ENCODE measurements at regions of chr7 and their contacts with region 1.

Region 1: GRCh38 chr7:102396027-102397019 is at the start of gene PRKRIP1:
- DNase-seq: peak; percentile 98
- ATAC-seq: peak; percentile 99
- H3K4me3 ChIP-seq: peak within 1 kb of the TSS; percentile 67 to 98 (median 95)
- H3K4me3 Mint-ChIP-seq: peak within 1 kb of the TSS; percentile 87
- H3K27ac ChIP-seq: peak within 1 kb of the TSS; percentile 86 to 88
- H3K27ac Mint-ChIP-seq: peak within 1 kb of the TSS; percentile 92
- H3K4me1 ChIP-seq: peaks cover 15 to 21% of the 10 kb centered on the region in 2 donors
- H3K4me1 Mint-ChIP-seq: peaks cover 29% of the 10 kb centered on the region
- H3K27me3 ChIP-seq: no peaks in the 10 kb centered on the region
- H3K27me3 Mint-ChIP-seq: no peaks in the 10 kb centered on the region
- CTCF ChIP-seq: no peak
- total RNA-seq, gene PRKRIP1: 57.9 and 59.1 TPM in 2 replicates

Region 2: GRCh38 chr7:102279537-102280400 is 116.6 kb before region 1 on chr7:
- CTCF ChIA-PET with region 1: interaction called, 351 read pairs
- POLR2A ChIA-PET with region 1: interaction called, 7 read pairs
- intact Hi-C with region 1: no loop called
- DNase-seq: peak; percentile 84
- ATAC-seq: peak; percentile 90
- H3K4me3 ChIP-seq: peak overlapping the region in 3 of 5 experiments; percentile 13 to 44 (median 15)
- H3K4me3 Mint-ChIP-seq: peak overlapping the region; percentile 83
- H3K27ac ChIP-seq: no peak overlapping the region
- H3K27ac Mint-ChIP-seq: peak overlapping the region; percentile 84
- H3K4me1 ChIP-seq: peaks cover 17 to 24% of the 10 kb centered on the region in 2 donors
- H3K4me1 Mint-ChIP-seq: peaks cover 28% of the 10 kb centered on the region
- H3K27me3 ChIP-seq: no peaks in the 10 kb centered on the region
- H3K27me3 Mint-ChIP-seq: no peaks in the 10 kb centered on the region
- CTCF ChIP-seq: peak; percentile 87

Region 3: GRCh38 chr7:102306875-102307677 is 89.2 kb before region 1 on chr7:
- CTCF ChIA-PET with region 1: interaction called, 7 read pairs
- POLR2A ChIA-PET with region 1: interaction called, 3 read pairs
- intact Hi-C with region 1: loop called (anchors 1 kb)
- DNase-seq: peak; percentile 90
- ATAC-seq: peak; percentile 86
- H3K4me3 ChIP-seq: peak overlapping the region in 4 of 5 experiments; percentile 37 to 51 (median 44)
- H3K4me3 Mint-ChIP-seq: peak overlapping the region; percentile 84
- H3K27ac ChIP-seq: peak overlapping the region; percentile 93 to 95
- H3K27ac Mint-ChIP-seq: peak overlapping the region; percentile 98
- H3K4me1 ChIP-seq: peaks cover 78 to 90% of the 10 kb centered on the region in 2 donors
- H3K4me1 Mint-ChIP-seq: peaks cover 82% of the 10 kb centered on the region
- H3K27me3 ChIP-seq: no peaks in the 10 kb centered on the region
- H3K27me3 Mint-ChIP-seq: no peaks in the 10 kb centered on the region
- CTCF ChIP-seq: no peak

Region 4: GRCh38 chr7:102433219-102434038 is 37.1 kb after region 1 on chr7 and contains the start of gene ORAI2:
- CTCF ChIA-PET with region 1: interaction called, 1,182 read pairs
- POLR2A ChIA-PET with region 1: interaction called, 5 read pairs
- intact Hi-C with region 1: loop called (anchors 1 kb)
- DNase-seq: peak; percentile 91
- ATAC-seq: peak; percentile 62
- H3K4me3 ChIP-seq: peak within 1 kb of the TSS; percentile 87 to 97 (median 94)
- H3K4me3 Mint-ChIP-seq: peak within 1 kb of the TSS; percentile 99
- H3K27ac ChIP-seq: peak within 1 kb of the TSS; percentile 98 to 100
- H3K27ac Mint-ChIP-seq: peak within 1 kb of the TSS; percentile 98
- H3K4me1 ChIP-seq: peaks cover 67 to 75% of the 10 kb centered on the region in 2 donors
- H3K4me1 Mint-ChIP-seq: peaks cover 67% of the 10 kb centered on the region
- H3K27me3 ChIP-seq: no peaks in the 10 kb centered on the region
- H3K27me3 Mint-ChIP-seq: no peaks in the 10 kb centered on the region
- CTCF ChIP-seq: no peak
- total RNA-seq, gene ORAI2: 450 and 461 TPM in 2 replicates

Region 5: DNA sequence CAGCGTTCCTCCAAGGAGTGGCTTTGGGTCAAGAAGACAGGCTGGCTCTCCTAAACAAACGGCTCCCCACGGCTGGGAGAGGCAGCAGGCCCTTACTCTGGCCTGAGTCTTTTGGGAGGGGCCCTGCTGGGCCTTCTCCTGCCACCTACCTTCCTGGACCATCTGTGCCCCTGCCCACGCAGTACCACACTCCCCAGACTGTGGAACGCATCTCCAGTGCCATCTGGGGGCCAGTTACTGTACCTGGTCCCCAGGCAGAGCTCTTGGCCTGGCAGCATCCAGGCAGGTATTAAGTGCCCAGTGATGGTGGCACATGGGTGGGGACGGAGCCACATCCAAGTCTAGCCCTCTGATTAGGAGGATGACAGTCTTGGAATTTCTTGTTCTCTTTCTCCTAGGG is 53.9 kb after region 1 on chr7:
- CTCF ChIA-PET with region 1: interaction called, 1,182 read pairs
- POLR2A ChIA-PET with region 1: interaction called, 5 read pairs
- intact Hi-C with region 1: loop called (anchors 1 kb)
- DNase-seq: peak; percentile 75
- ATAC-seq: peak; percentile 77
- H3K4me3 ChIP-seq: no peak overlapping the region
- H3K4me3 Mint-ChIP-seq: no peak overlapping the region
- H3K27ac ChIP-seq: peak overlapping the region in 1 of 2 donors; percentile 45
- H3K27ac Mint-ChIP-seq: peak overlapping the region; percentile 91
- H3K4me1 ChIP-seq: peaks cover 17 to 25% of the 10 kb centered on the region in 2 donors
- H3K4me1 Mint-ChIP-seq: peaks cover 28% of the 10 kb centered on the region
- H3K27me3 ChIP-seq: no peaks in the 10 kb centered on the region
- H3K27me3 Mint-ChIP-seq: no peaks in the 10 kb centered on the region
- CTCF ChIP-seq: peak; percentile 80

Measured in B cell (primary cell).